Activated T-helper 2 cell treated with anti-CD3 and anti-CD28 coated beads, Interferon-gamma antibody, Interleukin-2, Interleukin-4, amounts not matched to agents 10 μg/mL and 5 μg/mL and 100 μg/mL, durations not matched to agents 14 hours and 24 hours and 36 hours (primary cell): ENCODE measurements at regions of chr1 and their contacts with region 1.

Region 1: GRCh38 chr1:66996018-66996682 is 57.8 kb downstream of the SLC35D1 start:
- DNase-seq: peak; percentile 49
- H3K4me3 Mint-ChIP-seq: no peak overlapping the region
- H3K27ac Mint-ChIP-seq: no peak overlapping the region
- H3K4me1 Mint-ChIP-seq: peaks cover 15% of the 10 kb centered on the region
- H3K27me3 Mint-ChIP-seq: no peaks in the 10 kb centered on the region

Region 2: DNA sequence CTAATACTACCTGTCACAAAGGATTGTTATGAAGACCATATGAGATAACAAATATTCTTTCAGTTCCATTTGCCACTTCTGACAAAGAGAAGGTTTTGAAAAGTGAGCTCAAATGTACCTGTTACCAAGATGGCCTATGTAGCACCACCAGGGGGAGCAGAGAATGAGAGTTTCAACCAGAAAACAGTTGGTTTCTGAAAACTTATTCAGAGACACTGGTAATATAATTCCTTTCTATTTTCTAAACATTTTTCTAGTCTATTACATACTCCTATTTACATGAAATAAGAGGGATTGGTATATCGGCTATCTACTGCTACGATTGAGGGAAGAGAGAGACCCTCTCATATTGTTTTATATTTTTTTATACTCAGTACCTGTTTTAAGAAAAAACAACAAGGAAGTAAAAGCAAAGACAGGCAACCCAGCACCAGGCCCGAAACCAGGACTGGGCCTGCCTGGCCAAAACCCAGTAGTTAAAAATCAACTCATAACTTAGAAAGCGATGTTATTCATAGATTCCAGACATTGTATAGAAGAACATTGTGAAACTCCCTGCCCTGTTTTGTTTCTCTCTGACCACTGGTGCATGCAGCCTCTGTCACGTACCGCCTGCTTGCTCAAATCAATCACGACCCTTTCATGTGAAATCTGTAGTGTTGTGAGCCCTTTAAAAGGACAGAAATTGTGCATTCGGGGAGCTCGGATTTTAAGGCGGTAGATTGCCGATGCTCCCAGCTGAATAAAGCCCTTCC is 218.4 kb after region 1 on chr1:
- intact Hi-C with region 1: loop called (anchors 2 kb)
- DNase-seq: no peak
- H3K4me3 Mint-ChIP-seq: no peak overlapping the region
- H3K27ac Mint-ChIP-seq: no peak overlapping the region
- H3K4me1 Mint-ChIP-seq: peaks cover 32% of the 10 kb centered on the region
- H3K27me3 Mint-ChIP-seq: no peaks in the 10 kb centered on the region